Posterior vena cava (tissue), 2 donors: ENCODE measurements at regions of chr7 and their contacts with region 1.

Region 1: GRCh38 chr7:79880312-79880711 is 254.3 kb upstream of the GNAI1 start:
- DNase-seq: no peak

Region 2: GRCh38 chr7:79636849-79637248 is 243.5 kb before region 1 on chr7:
- intact Hi-C with region 1: loop called in 1 of 2 experiments (anchors 5 kb)
- DNase-seq: no peak

Region 3: DNA sequence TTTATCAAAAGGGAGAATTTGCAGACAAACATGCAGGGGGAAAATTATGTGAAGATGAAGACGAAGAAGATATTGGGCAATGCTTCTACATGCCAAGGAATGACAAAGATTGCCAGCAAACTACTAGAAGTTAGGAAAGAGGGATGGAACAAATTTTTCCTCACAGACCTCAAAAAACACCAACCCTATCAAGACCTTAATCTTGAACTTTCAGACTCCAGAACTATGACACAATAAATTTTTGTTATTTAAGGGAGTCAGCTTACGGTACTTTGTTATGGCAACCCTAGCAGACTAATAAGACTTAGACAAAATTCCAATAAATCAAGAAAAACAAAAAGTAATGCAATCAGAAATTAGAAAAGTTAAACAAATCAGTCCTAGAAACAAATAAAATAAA is 25.7 kb before region 1 on chr7:
- intact Hi-C with region 1: no loop called
- DNase-seq: no peak